Endothelial cell of umbilical vein (primary cell): ENCODE measurements at regions of chr2 and their contacts with region 1.

Region 1: DNA sequence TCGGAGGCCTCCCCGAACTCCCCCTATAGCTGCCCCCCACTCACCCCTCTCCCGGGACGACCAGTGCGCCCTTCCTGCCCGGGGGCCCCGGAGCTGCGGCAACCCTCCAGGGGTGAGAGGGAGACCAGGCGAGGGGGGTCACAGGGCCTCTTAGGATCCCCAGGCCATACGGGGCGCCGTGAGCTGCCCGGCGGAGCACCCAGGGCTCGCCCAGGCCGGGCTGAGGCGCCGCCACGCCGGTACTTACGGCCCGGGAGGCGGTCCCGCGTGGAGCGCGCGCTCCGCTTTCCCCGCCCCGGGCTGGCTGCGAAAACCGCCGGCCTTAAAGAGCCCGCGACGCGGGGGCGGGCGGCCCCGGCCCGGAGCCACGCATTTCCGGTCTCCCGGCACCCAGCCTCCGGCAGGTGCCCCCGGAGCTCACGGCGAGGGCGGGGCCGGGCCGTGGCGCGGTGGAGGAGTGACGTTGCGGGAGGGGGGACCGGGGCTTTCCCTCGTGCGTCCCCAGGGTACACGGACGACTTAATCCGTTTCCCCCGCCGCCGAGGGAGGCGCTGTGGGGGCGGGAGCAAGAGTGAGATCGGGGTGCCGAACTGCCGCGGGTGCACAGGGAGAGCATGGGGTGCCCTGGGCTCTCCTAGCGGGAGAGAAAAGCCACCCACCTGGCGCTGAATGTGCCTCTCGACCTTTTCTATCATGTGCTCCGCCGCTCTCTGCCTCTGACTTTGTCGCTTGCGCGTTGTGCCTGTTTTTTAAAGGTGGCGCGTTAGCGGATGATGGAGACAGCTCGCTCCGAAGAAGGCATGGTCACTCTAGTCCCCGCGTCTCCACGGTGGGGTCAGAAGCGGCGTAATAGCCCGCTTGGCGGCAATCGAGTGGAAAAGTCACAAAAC is at the start of gene METTL21A:
- DNase-seq: peak; percentile 86
- H3K4me3 ChIP-seq: peak within 1 kb of the TSS; percentile 20 to 75 (median 67)
- H3K27ac ChIP-seq: peak within 1 kb of the TSS; percentile 61
- H3K4me1 ChIP-seq: peaks cover 6% of the 10 kb centered on the region
- H3K27me3 ChIP-seq: no peaks in the 10 kb centered on the region
- CTCF ChIP-seq: peak; percentile 39 to 56
- POLR2A ChIP-seq: no peak
- total RNA-seq, gene METTL21A: 12.8 and 14.0 TPM in 2 replicates

Region 2: GRCh38 chr2:206800506-206801417 is 824.5 kb before region 1 on chr2:
- CTCF ChIA-PET with region 1: no interaction called
- POLR2A ChIA-PET with region 1: no interaction called
- dilution Hi-C with region 1: no loop called
- intact Hi-C with region 1: loop called (anchors 1 kb)
- DNase-seq: peak; percentile 82
- H3K4me3 ChIP-seq: no peak overlapping the region
- H3K27ac ChIP-seq: no peak overlapping the region
- H3K4me1 ChIP-seq: peaks cover 14% of the 10 kb centered on the region
- H3K27me3 ChIP-seq: no peaks in the 10 kb centered on the region
- CTCF ChIP-seq: peak; percentile 55 to 68
- POLR2A ChIP-seq: no peak

Region 3: GRCh38 chr2:207683879-207684627 is 58.8 kb after region 1 on chr2:
- CTCF ChIA-PET with region 1: interaction called, 11 read pairs
- POLR2A ChIA-PET with region 1: no interaction called
- dilution Hi-C with region 1: no loop called
- intact Hi-C with region 1: no loop called
- DNase-seq: peak; percentile 65
- H3K4me3 ChIP-seq: no peak overlapping the region
- H3K27ac ChIP-seq: peak overlapping the region; percentile 0
- H3K4me1 ChIP-seq: peaks cover 14% of the 10 kb centered on the region
- H3K27me3 ChIP-seq: no peaks in the 10 kb centered on the region
- CTCF ChIP-seq: no peak
- POLR2A ChIP-seq: no peak

Region 4: DNA sequence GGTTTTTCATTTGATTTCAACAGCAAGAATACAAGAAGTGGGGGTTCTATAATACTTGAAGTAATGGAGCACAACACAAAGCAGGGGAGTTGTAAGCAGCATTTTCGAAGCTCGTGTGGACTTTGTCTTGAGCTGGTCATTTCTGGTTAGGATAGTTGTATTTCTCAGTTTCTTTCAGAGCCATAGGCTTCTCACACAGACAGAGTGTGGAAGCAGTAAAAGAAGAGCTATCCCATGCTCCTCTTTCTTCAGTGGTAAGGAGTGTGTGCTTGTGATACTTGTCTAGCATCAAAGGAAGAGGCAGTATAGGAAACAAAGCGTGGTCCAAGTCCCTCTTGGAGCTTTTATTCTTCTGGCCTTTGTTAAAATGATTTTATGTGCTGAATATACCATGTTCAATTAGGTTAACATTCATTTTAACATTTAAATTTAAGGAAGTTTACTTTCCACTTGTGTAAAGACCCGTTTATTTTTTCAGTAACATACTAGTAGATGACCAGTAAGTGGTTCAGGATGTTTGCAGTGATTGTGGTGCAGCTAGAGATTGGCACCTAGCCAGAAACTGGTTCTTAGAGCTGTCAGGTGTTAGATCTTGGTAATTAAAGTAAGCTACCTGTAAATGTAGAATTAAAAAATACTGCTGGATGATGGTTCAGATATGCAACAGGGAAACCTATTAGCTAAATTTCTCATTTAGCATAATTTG is 100.8 kb after region 1 on chr2:
- CTCF ChIA-PET with region 1: interaction called, 45 read pairs
- POLR2A ChIA-PET with region 1: interaction called, 3 read pairs
- dilution Hi-C with region 1: no loop called
- intact Hi-C with region 1: no loop called
- DNase-seq: peak; percentile 62
- H3K4me3 ChIP-seq: no peak overlapping the region
- H3K27ac ChIP-seq: no peak overlapping the region
- H3K4me1 ChIP-seq: peaks cover 20% of the 10 kb centered on the region
- H3K27me3 ChIP-seq: no peaks in the 10 kb centered on the region
- CTCF ChIP-seq: no peak
- POLR2A ChIP-seq: no peak

Region 5: GRCh38 chr2:207769597-207770486 is 144.6 kb after region 1 on chr2 and contains the start of gene FZD5:
- CTCF ChIA-PET with region 1: interaction called, 3 read pairs
- POLR2A ChIA-PET with region 1: no interaction called
- dilution Hi-C with region 1: no loop called
- intact Hi-C with region 1: loop called (anchors 1 kb)
- DNase-seq: peak; percentile 91
- H3K4me3 ChIP-seq: peak within 1 kb of the TSS; percentile 66 to 80 (median 67)
- H3K27ac ChIP-seq: no peak within 1 kb of the TSS
- H3K4me1 ChIP-seq: peaks cover 16% of the 10 kb centered on the region
- H3K27me3 ChIP-seq: no peaks in the 10 kb centered on the region
- CTCF ChIP-seq: peak; percentile 51 to 72
- POLR2A ChIP-seq: no peak
- total RNA-seq, gene FZD5: 2.8 and 3.3 TPM in 2 replicates

Region 6: DNA sequence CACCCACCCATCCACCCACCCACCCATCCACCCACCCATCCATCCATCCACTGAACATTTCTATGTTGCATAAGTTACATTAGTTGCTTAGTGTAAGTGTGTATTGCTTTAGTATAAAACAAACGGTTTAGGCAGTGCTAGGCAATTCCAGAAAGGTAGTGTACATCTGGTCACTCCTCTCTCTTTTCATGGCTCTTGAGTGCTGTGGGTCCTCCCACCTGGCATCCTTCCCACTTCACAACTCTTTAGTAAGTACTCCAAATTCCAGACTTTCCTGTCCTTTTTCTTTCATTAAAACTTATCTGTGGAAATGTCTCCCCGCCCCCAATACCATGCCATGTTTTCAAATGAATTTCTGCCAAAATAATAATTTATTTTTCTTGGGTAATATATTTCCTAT is 277.6 kb after region 1 on chr2:
- CTCF ChIA-PET with region 1: no interaction called
- POLR2A ChIA-PET with region 1: no interaction called
- dilution Hi-C with region 1: no loop called
- intact Hi-C with region 1: no loop called
- DNase-seq: peak; percentile 35
- H3K4me3 ChIP-seq: no peak overlapping the region
- H3K27ac ChIP-seq: no peak overlapping the region
- H3K4me1 ChIP-seq: peaks cover 7% of the 10 kb centered on the region
- H3K27me3 ChIP-seq: no peaks in the 10 kb centered on the region
- CTCF ChIP-seq: no peak
- POLR2A ChIP-seq: no peak

Region 7: DNA sequence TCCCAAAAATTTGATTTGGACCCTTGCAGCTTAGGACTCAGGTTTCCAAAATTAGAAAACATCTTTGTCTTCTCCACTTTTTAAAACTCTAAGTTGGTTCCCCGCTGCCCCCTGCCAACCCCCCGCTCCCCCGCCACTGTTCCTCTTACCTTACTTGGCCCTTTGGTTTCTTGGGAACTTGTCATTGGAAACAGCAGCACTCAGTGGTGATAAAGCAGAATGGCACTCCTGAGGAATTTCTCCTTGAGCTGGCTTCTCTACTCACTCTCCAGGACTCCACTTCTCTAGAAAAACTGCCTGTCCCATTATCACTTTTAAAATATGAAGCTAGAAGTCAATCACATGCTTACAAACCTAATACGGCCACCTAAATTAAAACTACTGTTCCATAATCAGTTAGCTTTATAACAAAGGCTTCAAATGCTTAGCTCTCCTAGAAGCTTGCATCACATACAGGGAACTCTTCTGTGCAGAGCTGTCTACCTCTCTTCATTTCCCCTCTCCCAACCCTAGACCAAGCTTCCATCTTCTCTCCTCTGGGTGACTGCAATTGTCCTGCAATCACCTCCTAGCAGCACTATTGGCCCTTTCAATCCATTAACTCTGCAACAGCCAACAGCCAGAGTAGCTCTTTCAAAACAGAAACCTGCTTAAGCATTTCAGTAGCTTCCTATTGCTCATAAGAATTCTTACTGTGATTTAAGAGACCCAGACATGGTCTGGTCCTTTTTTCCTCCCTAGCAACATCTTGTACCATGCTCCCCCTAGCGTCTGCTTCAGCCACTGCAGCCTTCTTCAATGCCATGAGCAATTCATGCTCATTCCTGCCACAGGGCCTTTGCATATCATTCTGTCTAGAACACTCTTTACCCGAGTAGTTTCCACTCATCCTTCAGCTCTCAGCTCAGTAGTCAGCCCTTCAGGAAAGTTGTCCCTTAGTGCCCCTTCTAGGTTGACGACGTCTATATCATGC is 415.2 kb after region 1 on chr2:
- CTCF ChIA-PET with region 1: interaction called, 26 read pairs
- POLR2A ChIA-PET with region 1: no interaction called
- dilution Hi-C with region 1: no loop called
- intact Hi-C with region 1: loop called (anchors 2 kb)
- DNase-seq: peak; percentile 63
- H3K4me3 ChIP-seq: no peak overlapping the region
- H3K27ac ChIP-seq: no peak overlapping the region
- H3K4me1 ChIP-seq: no peaks in the 10 kb centered on the region
- H3K27me3 ChIP-seq: peaks cover 0 to 3% of the 10 kb centered on the region in 2 experiments
- CTCF ChIP-seq: peak; percentile 74 to 84
- POLR2A ChIP-seq: no peak

Region 8: GRCh38 chr2:208570851-208571764 is 945.8 kb after region 1 on chr2:
- CTCF ChIA-PET with region 1: no interaction called
- POLR2A ChIA-PET with region 1: no interaction called
- dilution Hi-C with region 1: no loop called
- intact Hi-C with region 1: no loop called
- DNase-seq: no peak
- H3K4me3 ChIP-seq: no peak overlapping the region
- H3K27ac ChIP-seq: no peak overlapping the region
- H3K4me1 ChIP-seq: no peaks in the 10 kb centered on the region
- H3K27me3 ChIP-seq: no peaks in the 10 kb centered on the region
- CTCF ChIP-seq: no peak
- POLR2A ChIP-seq: no peak